Left cardiac atrium (tissue), 4 donors: ENCODE measurements at regions of chr7 and their contacts with region 1.

Region 1: GRCh38 chr7:41977151-41977651 is 259.8 kb downstream of the GLI3 start:
- DNase-seq: no peak
- ATAC-seq: peak; percentile 65 to 74

Region 2: GRCh38 chr7:41940760-41941343 is 36.3 kb before region 1 on chr7:
- intact Hi-C with region 1: loop called in 1 of 2 experiments (anchors 2 kb)
- DNase-seq: peak; percentile 67
- ATAC-seq: peak; percentile 83 to 84

Region 3: GRCh38 chr7:41996381-41997035 is 19.3 kb after region 1 on chr7:
- intact Hi-C with region 1: no loop called
- DNase-seq: no peak
- ATAC-seq: peak in 1 of 2 donors; percentile 55

Region 4: GRCh38 chr7:42014625-42015546 is 37.7 kb after region 1 on chr7:
- intact Hi-C with region 1: no loop called
- DNase-seq: no peak
- ATAC-seq: peak in 1 of 2 donors; percentile 41

Region 5: GRCh38 chr7:42237162-42237821 is 260.1 kb after region 1 on chr7 and contains the start of gene GLI3:
- intact Hi-C with region 1: loop called in 1 of 2 experiments (anchors 10 kb)
- DNase-seq: peak; percentile 84
- ATAC-seq: peak; percentile 80 to 90
- total RNA-seq, gene GLI3: 6.0 to 8.1 TPM

Region 6: DNA sequence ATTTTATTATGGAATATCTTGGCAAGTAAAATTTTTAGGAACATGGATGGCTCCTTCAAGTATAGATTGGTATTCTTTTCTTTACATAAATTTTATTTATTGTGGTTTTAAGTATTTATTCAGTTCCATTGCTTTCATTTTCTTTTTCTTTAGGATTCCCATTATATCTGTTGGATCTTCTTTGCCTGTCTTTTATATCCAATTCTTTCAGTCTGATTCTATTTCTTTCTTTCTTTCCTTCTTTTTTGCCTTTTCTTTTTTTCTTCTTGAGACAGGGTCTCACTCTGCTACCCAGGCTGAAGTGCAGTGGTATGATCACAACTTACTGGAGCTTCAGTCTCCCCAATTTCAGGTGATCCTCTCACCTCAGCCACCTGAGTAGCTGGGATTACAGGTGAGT is 334.0 kb after region 1 on chr7:
- intact Hi-C with region 1: loop called in 1 of 2 experiments (anchors 10 kb)
- DNase-seq: no peak
- ATAC-seq: no peak

Region 7: DNA sequence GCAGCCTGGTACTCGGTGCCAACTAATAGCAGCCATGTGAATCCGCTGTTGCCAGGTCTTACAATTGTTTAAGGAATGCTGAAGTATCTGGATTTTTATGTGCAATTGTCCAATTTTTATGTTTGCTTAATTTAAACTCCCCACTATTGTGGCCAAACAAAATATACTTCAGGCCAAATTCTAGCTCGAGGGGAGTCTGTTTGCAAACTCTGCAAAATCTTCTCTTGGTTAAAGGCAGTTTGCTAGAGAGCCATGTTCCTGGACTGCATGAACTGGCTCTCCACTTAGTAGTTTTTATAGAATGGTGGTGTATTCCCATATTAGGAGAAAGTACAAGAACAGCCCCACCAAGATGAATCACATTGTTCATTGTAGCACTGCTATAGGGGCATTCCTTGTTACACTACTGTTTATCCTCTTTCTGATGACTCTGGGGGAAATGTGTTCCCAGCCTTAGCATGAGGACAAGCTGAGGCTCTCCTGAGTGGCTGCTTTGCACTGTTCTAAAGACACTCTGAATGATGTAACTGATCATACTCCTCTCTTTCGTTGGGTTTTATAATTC is 437.8 kb after region 1 on chr7:
- intact Hi-C with region 1: no loop called
- DNase-seq: no peak
- ATAC-seq: no peak

Region 8: DNA sequence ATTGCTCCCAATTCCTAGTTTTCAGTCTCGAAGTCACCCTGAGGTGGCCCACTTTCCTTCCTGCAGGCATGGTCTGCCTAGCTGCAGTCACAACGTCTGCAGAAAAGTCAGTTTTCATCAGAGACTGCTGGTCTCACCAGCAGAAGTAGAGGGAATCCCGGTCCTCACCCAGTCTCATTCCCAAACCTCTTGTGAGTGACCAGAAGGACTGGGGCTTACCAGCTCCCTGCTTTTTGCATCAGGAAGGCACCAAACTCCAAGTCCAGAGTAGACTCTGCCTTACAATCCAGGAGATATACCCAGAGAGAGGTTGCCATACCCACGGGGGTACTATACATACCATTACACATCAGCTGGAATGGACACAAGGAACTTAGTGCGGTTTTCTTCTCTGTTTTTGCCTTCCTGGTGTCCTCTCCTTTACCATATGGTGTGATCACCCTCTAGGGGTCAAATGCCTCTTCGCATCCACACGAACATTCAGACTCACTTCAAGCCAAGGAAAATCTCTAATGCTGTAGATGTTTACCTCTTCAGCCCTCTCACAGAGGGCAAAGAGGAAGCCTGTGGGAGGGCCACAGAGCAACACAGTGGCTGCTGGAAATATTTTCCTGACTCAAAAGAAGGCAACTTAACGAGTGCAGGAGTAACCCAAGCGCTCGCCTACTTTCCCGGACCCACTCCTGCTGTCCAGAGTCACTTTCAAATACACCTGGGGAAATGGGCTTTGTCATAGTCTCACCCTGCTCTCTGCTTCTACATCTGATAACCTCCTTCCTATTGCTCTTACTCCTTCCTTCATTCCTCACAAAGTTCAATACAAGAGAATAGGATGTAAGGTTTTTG is 713.8 kb after region 1 on chr7:
- intact Hi-C with region 1: loop called in 1 of 2 experiments (anchors 10 kb)
- DNase-seq: no peak
- ATAC-seq: peak; percentile 44 to 79